Caco-2 (cell line): ENCODE measurements at regions of chr6 and their contacts with region 1.

Region 1: DNA sequence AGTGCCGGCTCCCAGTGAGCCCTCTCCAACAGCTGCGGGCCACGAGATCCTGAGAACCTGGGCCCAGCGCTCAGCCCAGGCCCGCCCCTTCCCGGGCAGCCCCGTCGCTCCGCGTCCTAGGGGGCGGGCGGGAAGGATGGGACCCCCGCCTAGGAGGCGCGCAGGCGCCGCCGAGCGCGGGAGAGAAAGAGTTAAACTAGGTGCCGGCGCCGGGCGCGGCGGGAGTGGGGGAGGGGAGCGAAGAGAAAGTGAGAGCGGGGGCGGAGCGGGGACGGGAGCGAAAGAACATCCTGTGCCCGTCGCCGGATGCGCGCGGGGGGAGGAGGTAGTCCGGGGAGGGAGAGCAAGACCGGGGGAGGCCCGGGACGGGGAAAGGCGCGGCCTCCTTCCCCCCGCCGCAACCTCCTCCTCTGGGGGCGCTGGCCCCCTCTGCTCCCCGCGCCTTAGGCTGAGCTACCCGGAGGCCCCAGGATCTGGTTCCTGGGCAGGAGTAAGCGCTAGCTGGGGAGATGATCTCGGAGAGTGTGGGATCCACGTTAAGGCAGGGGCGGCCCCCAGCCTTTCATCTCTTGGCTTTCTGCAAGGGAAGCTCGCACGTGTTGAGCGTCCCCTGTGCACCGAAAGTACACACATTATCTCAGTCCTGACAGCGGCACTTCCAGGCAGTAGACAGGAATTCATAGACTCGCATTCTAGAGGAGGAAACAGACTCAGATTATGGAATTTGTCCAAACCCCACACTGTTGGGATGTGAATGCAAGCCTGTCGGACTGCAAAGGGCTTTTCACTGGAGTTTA is 4.9 kb upstream of the ARMC12 start:
- DNase-seq: peak; percentile 90 to 91
- H3K4me3 ChIP-seq: peak overlapping the region; percentile 62
- H3K4me3 Mint-ChIP-seq: peak overlapping the region; percentile 82
- H3K27ac Mint-ChIP-seq: peak overlapping the region; percentile 45
- H3K4me1 ChIP-seq: peaks cover 42% of the 10 kb centered on the region
- H3K4me1 Mint-ChIP-seq: peaks cover 14% of the 10 kb centered on the region
- H3K27me3 ChIP-seq: no peaks in the 10 kb centered on the region
- H3K27me3 Mint-ChIP-seq: no peaks in the 10 kb centered on the region
- CTCF ChIP-seq: peak in 1 of 2 experiments; percentile 3

Region 2: DNA sequence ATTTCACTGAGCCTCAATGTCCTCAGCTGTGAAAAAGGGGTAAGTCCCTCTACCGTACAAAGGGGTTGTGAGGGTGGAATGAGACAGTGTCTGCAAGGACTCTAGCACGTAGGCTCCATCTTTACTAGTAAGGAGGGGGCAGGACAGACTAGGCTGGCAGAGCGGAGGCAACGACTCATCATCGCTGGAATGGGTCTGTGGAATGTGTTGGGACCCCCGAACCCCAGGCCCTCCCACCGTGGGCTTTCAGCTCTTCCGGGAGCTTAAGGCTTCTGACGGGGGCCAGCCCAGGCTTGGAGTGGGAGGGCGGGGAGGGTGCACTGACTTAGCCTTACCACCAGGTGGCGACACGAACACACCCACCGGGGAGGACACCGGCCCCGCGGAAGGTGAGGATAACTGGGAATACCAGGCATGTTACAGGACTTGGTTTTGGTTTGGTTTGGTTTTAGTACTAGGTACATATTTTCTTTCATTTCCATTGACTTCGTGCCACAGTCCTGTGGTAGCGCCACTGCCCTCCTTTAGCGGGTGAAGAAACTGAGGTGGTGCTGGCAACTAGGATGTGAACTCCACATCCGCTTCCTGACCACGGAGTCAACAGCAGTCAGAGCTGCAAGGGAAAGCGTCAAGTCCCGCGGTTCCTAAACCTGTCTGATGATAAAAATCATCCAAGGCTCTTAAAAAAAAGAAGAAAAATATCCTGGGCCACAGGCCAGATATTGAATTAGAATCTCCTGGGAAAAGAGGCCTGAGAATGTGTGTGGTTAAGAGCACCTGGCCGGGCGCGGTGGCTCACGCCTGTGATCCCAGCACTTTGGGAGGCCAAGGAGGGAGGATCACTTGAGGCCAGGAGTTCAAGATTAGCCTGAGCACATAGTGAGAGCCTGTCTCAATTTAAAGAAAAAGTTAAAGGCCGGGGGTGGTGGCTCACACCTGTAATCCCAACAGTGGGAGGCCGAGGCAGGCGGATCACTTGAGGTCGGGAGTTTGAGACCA is 209.0 kb before region 1 on chr6:
- CTCF ChIA-PET with region 1: interaction called, 25 read pairs
- POLR2A ChIA-PET with region 1: no interaction called
- intact Hi-C with region 1: loop called (anchors 1 kb)
- DNase-seq: peak; percentile 71 to 74
- H3K4me3 ChIP-seq: no peak overlapping the region
- H3K4me3 Mint-ChIP-seq: no peak overlapping the region
- H3K27ac Mint-ChIP-seq: no peak overlapping the region
- H3K4me1 ChIP-seq: peaks cover 11% of the 10 kb centered on the region; the same call in 1 of the 2 replicates
- H3K4me1 Mint-ChIP-seq: peaks cover 7% of the 10 kb centered on the region
- H3K27me3 ChIP-seq: no peaks in the 10 kb centered on the region
- H3K27me3 Mint-ChIP-seq: no peaks in the 10 kb centered on the region
- CTCF ChIP-seq: peak; percentile 93 to 96

Region 3: GRCh38 chr6:35583893-35584688 is 147.8 kb before region 1 on chr6:
- CTCF ChIA-PET with region 1: interaction called, 31 read pairs
- POLR2A ChIA-PET with region 1: no interaction called
- intact Hi-C with region 1: loop called (anchors 1 kb)
- DNase-seq: peak; percentile 54 to 75
- H3K4me3 ChIP-seq: no peak overlapping the region
- H3K4me3 Mint-ChIP-seq: no peak overlapping the region
- H3K27ac Mint-ChIP-seq: no peak overlapping the region
- H3K4me1 ChIP-seq: no peaks in the 10 kb centered on the region
- H3K4me1 Mint-ChIP-seq: no peaks in the 10 kb centered on the region
- H3K27me3 ChIP-seq: no peaks in the 10 kb centered on the region
- H3K27me3 Mint-ChIP-seq: no peaks in the 10 kb centered on the region
- CTCF ChIP-seq: peak; percentile 72 to 88

Region 4: DNA sequence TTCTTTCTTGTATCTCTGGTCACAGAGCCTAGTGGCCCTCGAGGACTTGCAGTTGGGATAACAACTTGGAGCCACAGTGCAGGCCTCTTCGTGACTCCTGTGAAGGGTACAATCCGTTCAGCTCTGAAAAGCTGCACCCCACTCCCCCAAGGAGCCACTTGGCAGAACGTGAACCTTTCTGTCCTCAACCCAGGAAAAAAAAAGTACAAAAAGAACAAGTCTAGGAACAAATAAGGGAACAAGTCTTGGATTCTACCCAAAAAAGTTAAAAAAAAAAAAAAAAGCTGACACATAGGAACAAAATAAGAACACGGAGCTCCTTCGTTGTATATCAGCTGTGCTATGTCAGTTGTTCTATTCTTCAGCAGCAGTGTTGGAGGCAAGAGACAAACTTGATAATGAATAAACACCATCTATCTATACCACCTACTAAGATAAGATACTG is 141.3 kb before region 1 on chr6:
- CTCF ChIA-PET with region 1: interaction called, 31 read pairs
- POLR2A ChIA-PET with region 1: no interaction called
- intact Hi-C with region 1: no loop called
- DNase-seq: no peak
- H3K4me3 ChIP-seq: no peak overlapping the region
- H3K4me3 Mint-ChIP-seq: no peak overlapping the region
- H3K27ac Mint-ChIP-seq: no peak overlapping the region
- H3K4me1 ChIP-seq: no peaks in the 10 kb centered on the region
- H3K4me1 Mint-ChIP-seq: no peaks in the 10 kb centered on the region
- H3K27me3 ChIP-seq: no peaks in the 10 kb centered on the region
- H3K27me3 Mint-ChIP-seq: no peaks in the 10 kb centered on the region
- CTCF ChIP-seq: no peak

Region 5: GRCh38 chr6:35688581-35689322 is 43.2 kb before region 1 on chr6 and contains the start of gene FKBP5:
- CTCF ChIA-PET with region 1: interaction called, 5 read pairs
- POLR2A ChIA-PET with region 1: no interaction called
- intact Hi-C with region 1: loop called (anchors 1 kb)
- DNase-seq: peak; percentile 92 to 96
- H3K4me3 ChIP-seq: peak within 1 kb of the TSS; percentile 47
- H3K4me3 Mint-ChIP-seq: peak within 1 kb of the TSS; percentile 80
- H3K27ac Mint-ChIP-seq: peak within 1 kb of the TSS; percentile 45
- H3K4me1 ChIP-seq: peaks cover 14% of the 10 kb centered on the region
- H3K4me1 Mint-ChIP-seq: no peaks in the 10 kb centered on the region
- H3K27me3 ChIP-seq: no peaks in the 10 kb centered on the region
- H3K27me3 Mint-ChIP-seq: no peaks in the 10 kb centered on the region
- CTCF ChIP-seq: no peak
- total RNA-seq, gene FKBP5: 16.5 and 20.1 TPM in 2 replicates